ENCODE measurements at regions of chr7 and their contacts with region 1.

Region 1: GRCh38 chr7:87797798-87798403 is 78.3 kb downstream of the SLC25A40 start:
- DNase-seq: peak in 7 of 9 donors; percentile 11 to 49 (median 38)
- ATAC-seq: peak; percentile 77
- H3K4me3 ChIP-seq: no peak overlapping the region
- H3K4me3 Mint-ChIP-seq: no peak overlapping the region
- H3K27ac ChIP-seq: no peak overlapping the region
- H3K27ac Mint-ChIP-seq: no peak overlapping the region
- H3K4me1 ChIP-seq: no peaks in the 10 kb centered on the region
- H3K4me1 Mint-ChIP-seq: peaks cover 0 to 2% (median 0%) of the 10 kb centered on the region in 7 donors
- H3K27me3 ChIP-seq: no peaks in the 10 kb centered on the region
- H3K27me3 Mint-ChIP-seq: peaks cover 7 to 19% (median 18%) of the 10 kb centered on the region in 5 donors

Region 2: GRCh38 chr7:87506246-87507180 is 291.4 kb before region 1 on chr7:
- CTCF ChIA-PET with region 1: no interaction called
- POLR2A ChIA-PET with region 1: no interaction called
- intact Hi-C with region 1: loop called (anchors 2 to 10 kb)
- DNase-seq: peak in 3 of 9 donors; percentile 4 to 14 (median 12)
- ATAC-seq: no peak
- H3K4me3 ChIP-seq: no peak overlapping the region
- H3K4me3 Mint-ChIP-seq: no peak overlapping the region
- H3K27ac ChIP-seq: no peak overlapping the region
- H3K27ac Mint-ChIP-seq: no peak overlapping the region
- H3K4me1 ChIP-seq: no peaks in the 10 kb centered on the region
- H3K4me1 Mint-ChIP-seq: peaks cover 0 to 16% (median 0%) of the 10 kb centered on the region in 7 donors
- H3K27me3 ChIP-seq: no peaks in the 10 kb centered on the region
- H3K27me3 Mint-ChIP-seq: no peaks in the 10 kb centered on the region